Prostate gland (tissue), 2 donors: ENCODE measurements at regions of chr9 and their contacts with region 1.

Region 1: DNA sequence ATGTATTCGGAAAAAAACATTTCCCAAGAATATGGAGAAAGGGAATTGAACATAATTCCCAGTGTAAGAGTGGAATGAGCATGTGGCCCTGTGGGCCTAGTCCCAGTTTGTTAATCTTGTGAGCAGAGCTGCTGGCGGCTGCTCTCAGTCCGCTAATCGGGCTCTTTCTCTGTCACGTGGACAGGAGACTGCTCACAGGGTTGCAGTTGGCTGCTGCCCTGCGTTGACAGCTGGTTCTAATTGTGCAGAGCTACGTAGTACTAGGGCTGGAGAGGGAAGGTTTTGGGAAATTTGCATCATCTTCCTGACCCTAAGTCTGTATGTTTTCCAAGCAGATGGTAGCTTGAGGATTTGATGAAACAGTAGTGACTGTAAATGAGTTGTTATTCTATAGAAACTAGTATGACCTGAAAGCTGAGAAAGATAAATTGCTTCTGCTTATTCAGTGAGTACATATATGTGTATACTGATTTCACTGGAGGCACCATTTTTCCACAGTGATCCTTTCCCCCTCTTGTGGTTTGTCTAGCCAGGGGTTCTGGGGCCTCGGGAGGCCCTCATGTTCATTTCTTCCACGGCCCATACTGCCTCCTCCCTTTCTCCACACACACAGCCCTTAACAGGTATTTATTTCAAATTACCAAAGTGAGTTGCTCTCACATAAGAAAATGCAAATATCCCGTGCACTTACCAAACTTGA is 100.6 kb downstream of the ANGPTL2 start:
- DNase-seq: peak; percentile 36
- H3K4me3 ChIP-seq: no peak overlapping the region
- H3K27ac ChIP-seq: peak overlapping the region; percentile 85 to 90
- H3K4me1 ChIP-seq: peaks cover 13% of the 10 kb centered on the region
- H3K27me3 ChIP-seq: no peaks in the 10 kb centered on the region
- CTCF ChIP-seq: no peak
- POLR2A ChIP-seq: no peak

Region 2: GRCh38 chr9:126939821-126940221 is 82.0 kb before region 1 on chr9:
- intact Hi-C with region 1: no loop called
- DNase-seq: no peak
- H3K4me3 ChIP-seq: no peak overlapping the region
- H3K27ac ChIP-seq: no peak overlapping the region
- H3K4me1 ChIP-seq: no peaks in the 10 kb centered on the region
- H3K27me3 ChIP-seq: no peaks in the 10 kb centered on the region
- CTCF ChIP-seq: no peak
- POLR2A ChIP-seq: no peak

Region 3: GRCh38 chr9:126956917-126957686 is 64.7 kb before region 1 on chr9:
- intact Hi-C with region 1: loop called (anchors 5 kb)
- DNase-seq: no peak
- H3K4me3 ChIP-seq: no peak overlapping the region
- H3K27ac ChIP-seq: no peak overlapping the region
- H3K4me1 ChIP-seq: no peaks in the 10 kb centered on the region
- H3K27me3 ChIP-seq: no peaks in the 10 kb centered on the region
- CTCF ChIP-seq: no peak
- POLR2A ChIP-seq: no peak